ENCODE measurements at regions of chrX and their contacts with region 1.

Region 1: DNA sequence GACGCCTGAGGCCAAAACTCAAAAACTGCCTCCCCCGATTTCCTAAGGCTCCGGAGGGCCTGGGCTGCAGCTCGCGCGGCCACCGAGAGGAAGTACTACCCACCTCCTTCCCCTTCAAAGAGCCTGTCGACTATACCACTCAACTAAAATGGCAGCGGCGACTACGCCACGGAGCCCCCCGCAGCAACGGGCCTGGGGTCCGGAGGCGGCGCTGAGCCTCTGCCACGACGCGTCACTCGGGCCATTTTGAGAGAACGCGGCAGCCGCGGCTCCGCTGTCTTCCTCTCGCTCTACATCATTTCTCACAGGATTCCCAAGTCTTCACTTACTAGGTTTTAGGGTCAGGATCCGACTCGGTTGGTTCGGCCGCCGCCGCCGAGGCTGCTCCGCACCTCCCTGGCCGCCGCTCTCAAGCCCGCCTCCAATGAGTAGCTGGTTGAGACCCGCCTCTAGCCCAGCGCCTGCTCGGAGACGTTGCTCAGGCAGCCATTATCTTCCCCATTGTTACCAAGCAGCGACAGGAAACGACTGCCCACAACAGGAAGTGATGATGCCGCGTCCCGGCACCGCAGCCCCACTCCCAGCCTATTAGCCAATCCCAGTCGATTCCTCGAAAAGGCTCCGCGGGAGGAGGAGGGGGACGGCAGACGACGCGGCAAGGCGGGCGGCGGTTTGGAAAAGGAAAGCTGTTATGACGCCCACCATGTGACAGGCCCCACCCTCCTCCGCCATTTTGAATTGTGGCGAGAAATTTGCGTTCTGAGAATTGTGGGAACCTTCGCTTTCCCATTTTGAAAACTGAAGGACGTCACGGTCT is at the start of gene RLIM:
- DNase-seq: peak; percentile 89 to 96
- H3K4me3 ChIP-seq: peak within 1 kb of the TSS; percentile 66 to 79
- H3K27ac ChIP-seq: peak within 1 kb of the TSS; percentile 98
- H3K4me1 ChIP-seq: no peaks in the 10 kb centered on the region
- H3K27me3 ChIP-seq: no peaks in the 10 kb centered on the region
- CTCF ChIP-seq: no peak
- total RNA-seq, gene RLIM: 11.9 TPM

Region 2: GRCh38 chrX:74421036-74421739 is 193.1 kb before region 1 on chrX and contains the start of gene SLC16A2:
- intact Hi-C with region 1: loop called (anchors 2 kb)
- DNase-seq: peak in 1 of 2 donors; percentile 83
- H3K4me3 ChIP-seq: peak within 1 kb of the TSS; percentile 46 to 63
- H3K27ac ChIP-seq: peak within 1 kb of the TSS; percentile 85 to 94
- H3K4me1 ChIP-seq: no peaks in the 10 kb centered on the region
- H3K27me3 ChIP-seq: no peaks in the 10 kb centered on the region
- CTCF ChIP-seq: no peak
- total RNA-seq, gene SLC16A2: 10.7 TPM

Region 3: GRCh38 chrX:74536152-74536831 is 78.0 kb before region 1 on chrX:
- intact Hi-C with region 1: loop called (anchors 1 kb)
- DNase-seq: peak; percentile 43 to 90
- H3K4me3 ChIP-seq: peak overlapping the region; percentile 52 to 64
- H3K27ac ChIP-seq: peak overlapping the region; percentile 85 to 92
- H3K4me1 ChIP-seq: peaks cover 0 to 3% of the 10 kb centered on the region in 2 donors
- H3K27me3 ChIP-seq: no peaks in the 10 kb centered on the region
- CTCF ChIP-seq: peak; percentile 43 to 58 (median 48)

Region 4: DNA sequence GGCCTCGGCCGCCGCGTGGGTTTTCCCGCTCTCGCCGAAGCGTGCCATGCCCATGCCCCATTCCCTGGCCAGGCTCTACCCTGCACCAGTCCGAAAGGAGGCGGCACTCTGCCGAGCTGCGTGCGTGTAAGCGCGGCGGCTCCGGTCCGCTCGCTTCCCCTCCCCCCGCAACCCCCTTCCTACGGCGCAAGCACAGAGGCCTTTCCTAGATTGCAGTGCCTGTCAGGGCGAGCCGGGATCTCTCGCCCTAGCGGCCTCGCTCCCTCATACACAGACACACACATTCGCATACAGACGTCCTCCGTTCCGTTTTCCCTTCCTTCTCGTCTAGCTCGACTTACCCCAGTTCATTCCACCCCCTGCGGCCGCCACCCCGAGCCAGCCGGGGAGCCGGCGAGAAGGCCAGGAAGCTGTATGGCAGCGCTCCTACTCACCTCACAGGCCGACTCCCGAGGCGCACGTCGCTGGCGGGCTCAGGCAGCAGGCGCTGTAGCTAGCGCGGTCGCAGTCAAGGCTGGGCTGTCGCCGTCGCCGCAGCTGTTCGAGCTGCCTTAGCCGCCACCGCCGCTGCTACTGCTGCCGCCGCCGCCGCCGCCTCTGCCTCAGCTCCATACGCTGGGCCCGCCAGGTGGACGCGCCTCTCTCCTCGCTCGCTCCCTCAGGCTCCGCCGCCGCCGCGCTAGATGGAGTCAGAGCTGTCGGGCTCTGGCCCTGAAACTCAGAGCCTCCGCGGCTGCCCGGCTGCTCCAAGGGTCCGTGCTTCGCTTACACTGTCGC is 310.3 kb after region 1 on chrX:
- intact Hi-C with region 1: loop called (anchors 5 kb)
- DNase-seq: peak in 1 of 2 donors; percentile 68
- H3K4me3 ChIP-seq: peak overlapping the region; percentile 63 to 70
- H3K27ac ChIP-seq: peak overlapping the region; percentile 81 to 85
- H3K4me1 ChIP-seq: no peaks in the 10 kb centered on the region
- H3K27me3 ChIP-seq: no peaks in the 10 kb centered on the region
- CTCF ChIP-seq: no peak

Region 5: GRCh38 chrX:75106772-75107171 is 492.5 kb after region 1 on chrX:
- intact Hi-C with region 1: no loop called
- DNase-seq: no peak
- H3K4me3 ChIP-seq: no peak overlapping the region
- H3K27ac ChIP-seq: no peak overlapping the region
- H3K4me1 ChIP-seq: no peaks in the 10 kb centered on the region
- H3K27me3 ChIP-seq: no peaks in the 10 kb centered on the region
- CTCF ChIP-seq: no peak

Region 6: DNA sequence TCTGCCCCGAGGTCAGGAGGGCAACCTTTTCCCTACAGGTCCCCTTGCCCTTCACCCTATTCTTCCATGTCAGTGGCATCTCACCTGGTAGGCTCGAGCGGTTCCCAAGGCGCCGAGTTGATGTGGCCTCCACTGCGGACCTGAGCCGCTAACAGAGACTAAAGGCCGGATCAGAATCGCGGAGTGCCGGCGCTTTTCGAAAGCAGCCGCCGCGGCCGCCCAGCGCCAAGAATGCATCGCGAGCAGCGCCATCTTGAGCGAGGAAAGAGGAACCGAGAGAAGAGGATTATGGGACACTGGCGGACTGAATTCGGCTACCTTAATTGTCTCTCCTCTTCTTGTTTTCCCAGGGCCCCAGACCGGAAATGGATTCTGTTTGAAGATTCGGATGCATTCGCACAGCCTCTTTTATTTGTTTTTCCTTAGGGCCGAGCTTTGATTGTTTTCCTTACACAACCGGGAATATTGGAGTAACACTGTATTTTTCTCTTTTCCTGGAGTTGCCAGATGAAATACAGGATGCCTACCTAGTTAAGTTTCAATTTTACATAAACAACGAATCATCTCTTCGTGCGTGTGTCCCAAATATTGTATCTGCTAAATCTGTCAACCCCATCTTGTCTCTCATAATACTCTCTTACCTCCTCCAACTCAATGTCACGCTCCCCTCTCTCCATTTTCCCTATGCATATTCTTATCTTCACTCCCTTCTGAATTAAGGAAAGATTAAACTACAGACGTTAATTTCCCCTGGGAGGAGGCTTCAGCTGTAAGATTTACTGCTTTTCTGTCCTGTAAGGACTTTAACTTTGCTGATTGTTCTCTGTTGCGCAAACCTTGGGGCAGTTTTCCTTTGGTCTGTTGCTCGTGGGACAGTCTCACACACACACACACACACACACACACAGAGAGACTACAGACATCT is 542.0 kb after region 1 on chrX and contains the start of gene ABCB7:
- intact Hi-C with region 1: loop called (anchors 10 kb)
- DNase-seq: peak in 1 of 2 donors; percentile 75
- H3K4me3 ChIP-seq: peak within 1 kb of the TSS; percentile 49 to 69
- H3K27ac ChIP-seq: peak within 1 kb of the TSS; percentile 73 to 81
- H3K4me1 ChIP-seq: no peaks in the 10 kb centered on the region
- H3K27me3 ChIP-seq: no peaks in the 10 kb centered on the region
- CTCF ChIP-seq: peak in 1 of 3 experiments; percentile 41
- total RNA-seq, gene ABCB7: 157 TPM

Region 7: GRCh38 chrX:75273483-75273882 is 659.2 kb after region 1 on chrX:
- intact Hi-C with region 1: loop called (anchors 10 kb)
- DNase-seq: no peak
- H3K4me3 ChIP-seq: peak overlapping the region; percentile 64 to 78
- H3K27ac ChIP-seq: peak overlapping the region; percentile 86 to 97
- H3K4me1 ChIP-seq: no peaks in the 10 kb centered on the region
- H3K27me3 ChIP-seq: no peaks in the 10 kb centered on the region
- CTCF ChIP-seq: no peak

Region 8: GRCh38 chrX:75596178-75596577 is 981.9 kb after region 1 on chrX:
- intact Hi-C with region 1: loop called (anchors 10 kb)
- DNase-seq: no peak
- H3K4me3 ChIP-seq: no peak overlapping the region
- H3K27ac ChIP-seq: peak overlapping the region in 1 of 2 donors; percentile 40
- H3K4me1 ChIP-seq: no peaks in the 10 kb centered on the region
- H3K27me3 ChIP-seq: no peaks in the 10 kb centered on the region
- CTCF ChIP-seq: no peak